Uterus (tissue), 4 donors: ENCODE measurements at regions of chr10 and their contacts with region 1.

Region 1: GRCh38 chr10:119650692-119651513 is at the start of gene BAG3:
- DNase-seq: peak; percentile 95 to 97
- H3K4me3 ChIP-seq: peak within 1 kb of the TSS; percentile 96
- H3K27ac ChIP-seq: peak within 1 kb of the TSS; percentile 99 to 100
- H3K4me1 ChIP-seq: peaks cover 6 to 9% of the 10 kb centered on the region in 2 donors
- H3K27me3 ChIP-seq: no peaks in the 10 kb centered on the region
- CTCF ChIP-seq: no peak
- POLR2A ChIP-seq: peak in 1 of 2 donors; percentile 89
- total RNA-seq, gene BAG3: 6.6 to 44.1 (median 22.4) TPM

Region 2: DNA sequence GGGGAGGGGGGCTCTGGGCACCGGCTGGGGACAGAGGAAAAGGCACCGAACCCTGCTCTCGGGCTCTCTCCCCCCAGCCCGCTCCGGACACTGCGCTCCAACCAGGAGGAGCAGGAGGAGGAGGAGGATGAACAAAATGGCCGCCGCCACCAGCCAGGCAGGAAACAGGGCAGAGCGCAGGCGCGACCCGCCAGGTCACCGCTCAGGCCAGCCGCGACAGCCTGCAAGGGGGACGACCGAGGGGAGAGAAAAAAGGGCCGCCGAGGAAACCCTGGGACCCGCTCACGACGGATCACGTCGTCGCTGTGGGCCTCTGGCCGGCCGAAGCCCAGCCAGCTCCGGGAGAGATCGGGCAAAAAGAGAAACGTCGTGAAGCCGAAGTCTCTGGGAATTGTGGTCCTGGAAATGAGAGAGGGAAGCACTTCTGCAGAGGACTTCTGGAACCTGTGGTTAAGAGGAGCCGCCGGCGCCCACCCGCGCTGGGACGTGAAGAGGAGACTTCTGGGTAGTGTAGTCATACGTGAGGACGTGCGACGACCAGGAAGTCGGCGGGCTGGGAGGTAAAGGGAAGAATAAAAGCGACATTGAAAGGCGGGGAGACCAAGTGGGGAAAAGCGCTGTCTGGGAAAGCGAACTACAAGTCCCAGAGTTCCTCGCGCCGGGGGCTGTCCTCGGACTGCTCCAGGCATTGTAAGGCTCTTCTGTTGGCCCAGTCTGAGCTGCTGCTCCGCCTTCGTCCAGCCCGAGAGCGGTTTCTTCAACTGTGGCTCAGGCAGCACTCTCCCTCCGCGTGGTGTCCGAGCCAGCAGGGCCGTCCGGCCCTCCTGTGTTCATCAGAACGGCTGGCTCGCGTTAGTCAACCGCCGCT is 54.1 kb before region 1 on chr10 and contains the start of gene TIAL1:
- intact Hi-C with region 1: loop called (anchors 5 kb)
- DNase-seq: peak; percentile 98
- H3K4me3 ChIP-seq: peak within 1 kb of the TSS; percentile 82 to 86
- H3K27ac ChIP-seq: peak within 1 kb of the TSS; percentile 97 to 99
- H3K4me1 ChIP-seq: peaks cover 3 to 10% of the 10 kb centered on the region in 2 donors
- H3K27me3 ChIP-seq: no peaks in the 10 kb centered on the region
- CTCF ChIP-seq: peak in 1 of 4 experiments; percentile 7
- POLR2A ChIP-seq: peak; percentile 52 to 80
- total RNA-seq, gene TIAL1: 31.8 to 177 (median 143) TPM